ENCODE measurements at regions of chr17 and their contacts with region 1.

Region 1: GRCh38 chr17:6374761-6375312 is 60.1 kb downstream of the AIPL1 start:
- DNase-seq: peak; percentile 92
- H3K4me3 Mint-ChIP-seq: peak overlapping the region; percentile 9
- H3K27ac Mint-ChIP-seq: peak overlapping the region; percentile 86
- H3K4me1 Mint-ChIP-seq: peaks cover 21% of the 10 kb centered on the region
- H3K27me3 Mint-ChIP-seq: peaks cover 23% of the 10 kb centered on the region

Region 2: GRCh38 chr17:6179017-6179416 is 195.8 kb before region 1 on chr17:
- CTCF ChIA-PET with region 1: no interaction called
- intact Hi-C with region 1: no loop called
- DNase-seq: no peak
- H3K4me3 Mint-ChIP-seq: no peak overlapping the region
- H3K27ac Mint-ChIP-seq: no peak overlapping the region
- H3K4me1 Mint-ChIP-seq: no peaks in the 10 kb centered on the region
- H3K27me3 Mint-ChIP-seq: peaks cover 16% of the 10 kb centered on the region

Region 3: DNA sequence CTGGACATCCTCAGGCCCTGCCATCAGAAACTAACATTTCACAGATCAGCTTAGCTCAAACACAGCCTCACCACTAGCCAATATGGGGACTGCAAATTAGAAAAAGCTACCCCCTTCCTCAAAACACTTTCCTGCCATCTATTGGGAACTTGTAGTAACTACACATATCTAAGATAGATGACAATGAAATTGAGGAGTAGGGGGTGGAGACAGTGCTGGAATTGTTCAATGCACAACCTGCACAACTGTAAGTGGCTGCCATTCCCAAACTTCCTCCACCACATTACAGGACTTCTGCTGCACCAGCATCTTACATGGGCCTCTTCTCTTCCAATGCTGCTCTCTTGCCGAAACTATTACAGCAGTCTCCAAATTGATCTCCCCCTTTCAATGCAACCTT is 38.2 kb after region 1 on chr17:
- CTCF ChIA-PET with region 1: no interaction called
- intact Hi-C with region 1: loop called (anchors 5 kb)
- DNase-seq: no peak
- H3K4me3 Mint-ChIP-seq: no peak overlapping the region
- H3K27ac Mint-ChIP-seq: no peak overlapping the region
- H3K4me1 Mint-ChIP-seq: no peaks in the 10 kb centered on the region
- H3K27me3 Mint-ChIP-seq: no peaks in the 10 kb centered on the region

Measured in activated naive CD4-positive, alpha-beta T cell treated with anti-CD3 and anti-CD28 coated beads for 36 hours (primary cell).